Activated naive CD4-positive, alpha-beta T cell treated with anti-CD3 and anti-CD28 coated beads for 36 hours (primary cell): ENCODE measurements at regions of chr7 and their contacts with region 1.

Region 1: GRCh38 chr7:149284850-149285626 is 23.0 kb downstream of the ZNF783 start:
- DNase-seq: peak; percentile 99
- H3K4me3 Mint-ChIP-seq: peak overlapping the region; percentile 79
- H3K27ac Mint-ChIP-seq: no peak overlapping the region
- H3K4me1 Mint-ChIP-seq: peaks cover 36% of the 10 kb centered on the region
- H3K27me3 Mint-ChIP-seq: no peaks in the 10 kb centered on the region

Region 2: GRCh38 chr7:149147072-149147751 is 137.8 kb before region 1 on chr7 and contains the start of gene ZNF398:
- CTCF ChIA-PET with region 1: interaction called, 8 read pairs
- intact Hi-C with region 1: loop called (anchors 1 kb)
- DNase-seq: peak; percentile 73
- H3K4me3 Mint-ChIP-seq: peak within 1 kb of the TSS; percentile 87
- H3K27ac Mint-ChIP-seq: peak within 1 kb of the TSS; percentile 91
- H3K4me1 Mint-ChIP-seq: peaks cover 33% of the 10 kb centered on the region
- H3K27me3 Mint-ChIP-seq: no peaks in the 10 kb centered on the region
- total RNA-seq, gene ZNF398: 4.3 to 5.0 TPM

Region 3: DNA sequence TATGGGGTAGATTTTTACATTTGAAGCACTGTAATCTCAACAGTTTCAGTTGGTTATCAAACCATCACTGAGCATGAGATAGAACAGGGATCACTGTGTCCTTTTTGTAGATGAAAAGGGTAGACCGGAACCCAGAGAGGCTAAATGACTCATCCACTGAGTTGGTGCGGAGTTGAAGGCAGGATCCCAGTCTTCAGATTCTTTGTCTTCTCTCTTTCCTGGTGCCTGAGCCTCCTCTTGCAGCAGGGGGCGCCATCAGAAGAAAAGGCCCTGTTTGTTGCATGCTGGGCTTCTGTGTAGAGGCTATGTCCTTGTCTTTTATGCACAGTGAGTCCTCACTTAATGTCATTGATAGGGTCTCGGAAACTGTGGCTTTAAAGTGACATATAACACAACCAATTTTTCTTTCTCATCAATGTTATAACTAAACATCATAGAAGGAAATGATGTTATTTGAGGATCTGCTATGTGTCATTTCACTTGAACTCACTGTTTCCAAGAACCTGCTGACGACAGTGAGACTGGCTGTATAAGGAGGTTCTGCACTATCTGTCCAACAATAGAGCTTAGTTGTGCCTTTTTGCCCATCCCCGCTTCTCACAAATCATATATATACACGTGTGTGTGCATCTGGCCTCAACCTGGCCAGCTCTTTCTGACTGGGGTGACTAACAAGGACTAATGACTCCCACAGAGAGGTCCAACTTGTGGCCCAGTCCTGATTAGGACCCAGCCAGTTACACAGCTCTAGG is 75.3 kb before region 1 on chr7:
- CTCF ChIA-PET with region 1: no interaction called
- intact Hi-C with region 1: loop called (anchors 1 kb)
- DNase-seq: peak; percentile 86
- H3K4me3 Mint-ChIP-seq: no peak overlapping the region
- H3K27ac Mint-ChIP-seq: peak overlapping the region; percentile 72
- H3K4me1 Mint-ChIP-seq: peaks cover 5% of the 10 kb centered on the region
- H3K27me3 Mint-ChIP-seq: no peaks in the 10 kb centered on the region

Region 4: DNA sequence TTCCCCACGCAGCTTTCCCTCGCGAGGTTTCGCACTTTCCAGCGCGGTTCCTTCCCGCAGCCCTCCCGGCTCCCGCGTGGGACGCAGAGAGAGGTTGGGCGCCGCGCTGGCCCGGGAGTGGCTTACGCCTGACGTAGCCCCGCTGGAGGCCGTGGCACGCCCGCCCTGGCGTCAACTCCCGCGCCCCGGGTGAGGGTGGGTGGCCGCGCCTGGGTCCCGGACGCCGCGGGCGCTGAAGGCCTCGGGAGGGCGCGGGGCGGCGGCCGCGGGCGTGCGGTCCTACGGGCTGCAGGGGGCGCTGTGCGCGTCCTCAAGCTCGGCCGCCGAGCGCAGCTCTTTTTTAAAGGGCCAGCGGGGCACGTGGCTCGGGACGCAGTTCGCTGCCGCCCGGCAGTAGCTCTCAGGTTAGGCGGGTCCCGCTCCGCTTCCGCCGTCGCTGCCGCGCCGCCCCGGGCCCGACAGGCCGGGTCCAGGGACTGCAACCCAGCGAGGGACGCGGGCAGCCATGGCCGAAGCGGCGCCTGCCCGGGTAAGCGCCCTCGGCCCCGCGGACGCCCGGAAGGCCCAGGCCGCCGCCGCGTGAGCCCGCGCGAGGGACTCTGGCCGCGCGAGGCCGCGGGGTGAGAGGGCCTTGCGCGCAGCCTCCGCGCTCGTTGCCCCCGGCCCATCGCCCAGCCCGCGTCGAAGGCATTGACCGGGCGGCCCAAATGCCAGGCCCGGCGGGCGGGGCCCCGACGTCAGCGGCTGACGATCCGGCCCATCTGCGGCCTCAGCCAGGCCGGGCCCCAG is 23.0 kb before region 1 on chr7 and contains the start of gene ZNF783:
- CTCF ChIA-PET with region 1: interaction called, 26 read pairs
- intact Hi-C with region 1: loop called (anchors 1 kb)
- DNase-seq: peak; percentile 85
- H3K4me3 Mint-ChIP-seq: peak within 1 kb of the TSS; percentile 75
- H3K27ac Mint-ChIP-seq: peak within 1 kb of the TSS; percentile 74
- H3K4me1 Mint-ChIP-seq: peaks cover 29% of the 10 kb centered on the region
- H3K27me3 Mint-ChIP-seq: no peaks in the 10 kb centered on the region
- total RNA-seq, gene ZNF783: 6.8 to 7.1 TPM

Region 5: DNA sequence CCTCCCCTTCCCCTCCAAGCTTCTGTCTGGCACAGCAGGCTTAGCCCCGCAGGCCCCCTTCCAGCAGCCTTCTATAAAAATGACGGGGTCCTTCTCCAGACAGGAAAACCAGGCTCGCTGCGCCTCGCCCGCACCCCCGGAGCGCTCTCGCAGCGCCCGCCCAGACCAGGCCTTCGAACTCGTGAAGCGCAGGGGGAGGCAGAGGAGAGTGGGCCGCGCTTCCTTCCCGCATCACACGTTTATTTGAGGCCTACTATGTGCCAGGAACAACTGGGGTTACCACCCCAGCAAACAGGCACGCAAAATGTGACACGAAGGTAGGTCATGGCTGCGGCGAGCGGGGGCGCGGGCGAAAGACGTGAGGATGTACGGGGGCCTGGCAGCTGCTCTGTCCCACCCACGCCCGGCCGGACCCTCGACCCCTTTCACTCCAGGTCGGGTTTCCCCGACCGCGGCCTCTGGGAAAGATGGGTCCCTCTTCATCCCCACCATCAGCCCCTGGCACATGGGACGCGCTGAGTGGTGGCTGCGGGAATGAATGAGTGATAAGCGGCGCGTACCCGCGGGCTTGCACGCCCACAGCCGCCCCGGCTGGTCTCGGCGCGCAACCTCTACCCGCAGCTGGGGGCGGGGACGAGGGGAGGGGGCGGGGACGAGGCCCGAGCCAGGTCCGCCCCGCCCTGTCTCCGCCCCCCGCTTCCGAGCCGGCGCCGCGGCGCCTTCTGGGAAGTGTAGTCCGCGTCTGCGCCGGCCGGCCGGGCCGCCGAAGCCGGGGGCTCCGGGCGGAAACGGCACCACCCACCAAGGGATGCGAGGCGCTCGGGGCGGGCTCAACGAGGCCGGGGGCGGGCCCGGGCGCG is 429.2 kb after region 1 on chr7:
- CTCF ChIA-PET with region 1: no interaction called
- intact Hi-C with region 1: loop called (anchors 10 kb)
- DNase-seq: peak; percentile 94
- H3K4me3 Mint-ChIP-seq: peak overlapping the region; percentile 73
- H3K27ac Mint-ChIP-seq: no peak overlapping the region
- H3K4me1 Mint-ChIP-seq: peaks cover 17% of the 10 kb centered on the region
- H3K27me3 Mint-ChIP-seq: no peaks in the 10 kb centered on the region